H1 (cell line): ENCODE measurements at regions of chr12 and their contacts with region 1.

Region 1: DNA sequence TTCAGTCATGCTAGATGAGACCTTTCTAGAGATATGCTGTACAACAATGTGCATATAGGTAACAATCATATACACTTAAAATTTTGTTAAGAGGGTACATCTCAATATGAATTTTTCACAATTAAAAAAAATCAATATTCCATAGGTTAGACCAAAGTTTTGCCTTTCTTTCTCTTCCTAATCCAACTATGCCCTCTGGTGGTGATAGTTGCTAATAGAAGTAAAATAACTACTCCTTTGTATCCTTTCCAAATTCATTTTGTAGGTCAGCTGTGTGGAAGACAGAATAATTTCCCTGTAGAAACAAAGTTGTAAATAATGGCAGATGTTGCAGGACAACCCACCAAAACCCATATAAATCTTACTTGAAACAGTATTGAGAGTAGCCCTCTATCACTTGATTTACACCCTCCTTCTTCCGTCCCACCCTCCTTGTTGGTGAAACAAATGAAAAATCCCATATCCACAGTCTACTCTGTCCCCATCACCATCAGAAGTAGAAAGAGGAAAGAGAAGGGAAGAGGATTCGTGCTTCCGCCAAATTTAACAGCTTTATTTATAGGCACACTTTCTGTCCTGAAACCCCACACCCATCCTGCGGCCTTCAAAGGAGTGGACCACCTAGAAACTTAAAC is 34.2 kb upstream of the KICS2 start:
- DNase-seq: no peak
- H3K4me3 ChIP-seq: no peak overlapping the region
- H3K27ac ChIP-seq: no peak overlapping the region
- H3K4me1 ChIP-seq: peaks cover 0 to 2% (median 0%) of the 10 kb centered on the region in 4 experiments; a peak in 1 of 7 replicates
- H3K27me3 ChIP-seq: no peaks in the 10 kb centered on the region
- CTCF ChIP-seq: peak in 2 of 3 experiments; percentile 40 to 49; a peak in 2 of 4 replicates
- EP300 ChIP-seq: no peak
- POLR2A ChIP-seq: no peak
- RAD21 ChIP-seq: peak; percentile 76 to 90

Region 2: DNA sequence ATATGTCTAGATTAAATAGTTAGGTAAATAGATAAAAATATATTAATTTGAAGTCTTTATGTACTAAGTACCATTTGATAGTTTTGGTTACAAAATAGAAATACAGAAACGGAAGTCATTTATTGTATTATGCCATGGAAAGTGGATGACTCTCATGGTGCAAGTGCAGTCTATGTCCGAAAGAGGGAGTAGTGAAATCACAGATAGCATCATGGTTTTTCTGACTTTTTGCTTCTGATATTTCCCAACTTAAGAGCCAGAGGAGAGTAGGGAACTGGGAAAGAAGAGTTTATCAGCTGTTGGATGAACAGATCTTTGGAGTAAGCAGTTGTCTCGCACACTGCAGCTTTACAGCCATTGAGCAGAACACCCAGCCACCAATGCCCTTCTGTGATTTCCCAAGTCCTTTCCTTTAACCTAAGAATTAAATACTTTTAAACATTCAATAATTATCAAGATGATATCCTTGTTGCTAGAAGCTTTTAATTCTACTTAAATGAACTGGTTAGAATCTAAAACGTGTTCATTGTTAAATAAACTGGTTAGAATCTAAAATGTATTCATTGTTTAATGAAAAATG is 430.2 kb before region 1 on chr12:
- CTCF ChIA-PET with region 1: interaction called, 33 read pairs
- POLR2A ChIA-PET with region 1: no interaction called
- DNase-seq: no peak
- H3K4me3 ChIP-seq: no peak overlapping the region
- H3K27ac ChIP-seq: no peak overlapping the region
- H3K4me1 ChIP-seq: no peaks in the 10 kb centered on the region
- H3K27me3 ChIP-seq: no peaks in the 10 kb centered on the region
- CTCF ChIP-seq: peak in 2 of 3 experiments; percentile 60 to 77; a peak in 2 of 4 replicates
- EP300 ChIP-seq: no peak
- POLR2A ChIP-seq: no peak
- RAD21 ChIP-seq: peak; percentile 91 to 93

Region 3: GRCh38 chr12:64240781-64241180 is 15.5 kb before region 1 on chr12:
- CTCF ChIA-PET with region 1: interaction called, 18 read pairs
- POLR2A ChIA-PET with region 1: interaction called, 3 read pairs
- DNase-seq: no peak
- H3K4me3 ChIP-seq: no peak overlapping the region
- H3K27ac ChIP-seq: no peak overlapping the region
- H3K4me1 ChIP-seq: no peaks in the 10 kb centered on the region; a peak in 1 of 7 replicates
- H3K27me3 ChIP-seq: no peaks in the 10 kb centered on the region
- CTCF ChIP-seq: no peak
- EP300 ChIP-seq: no peak
- POLR2A ChIP-seq: no peak
- RAD21 ChIP-seq: no peak

Region 4: DNA sequence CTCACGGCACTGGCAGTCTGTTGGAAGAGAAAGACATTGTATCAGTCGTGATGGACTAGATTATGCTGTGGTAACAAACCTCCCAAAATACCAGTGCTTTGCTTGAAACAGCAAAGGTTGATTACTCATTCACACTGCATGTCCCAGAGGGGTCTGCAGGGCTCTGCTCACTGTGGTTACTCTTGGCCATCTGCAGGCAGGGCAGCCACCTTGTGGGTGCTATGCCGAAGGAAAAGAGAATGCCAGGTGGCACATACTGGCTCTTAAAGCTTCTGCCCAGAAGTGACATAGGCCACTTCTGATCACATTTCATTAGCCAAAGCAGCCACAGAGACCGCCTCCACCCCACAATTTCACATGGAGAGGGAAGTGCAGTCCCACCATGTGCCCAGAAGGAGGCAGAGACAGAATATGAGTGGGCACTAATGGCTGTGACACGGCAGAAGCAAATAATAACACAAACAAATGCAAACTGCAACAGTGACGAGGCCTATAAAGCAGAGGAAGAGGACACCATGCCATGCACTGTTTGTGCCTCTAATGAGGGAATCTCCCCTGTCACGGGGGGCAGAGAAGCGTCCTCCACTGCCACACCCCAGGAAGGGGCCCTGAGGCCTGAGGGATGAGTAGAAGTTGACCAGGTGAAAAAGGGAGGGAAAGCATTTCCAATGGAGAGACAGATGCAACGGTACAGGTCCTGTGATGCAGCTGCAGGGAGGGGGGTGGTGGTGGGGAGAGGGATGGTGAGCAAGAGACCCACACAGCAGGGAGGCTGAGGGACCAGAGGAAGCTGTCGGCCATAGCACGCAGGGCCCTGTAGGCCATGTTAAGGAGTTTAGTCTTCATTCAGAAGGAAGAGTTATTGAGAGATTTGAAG is 17.5 kb after region 1 on chr12:
- CTCF ChIA-PET with region 1: interaction called, 10 read pairs
- POLR2A ChIA-PET with region 1: interaction called, 3 read pairs
- DNase-seq: peak; percentile 38 to 71
- H3K4me3 ChIP-seq: no peak overlapping the region
- H3K27ac ChIP-seq: no peak overlapping the region
- H3K4me1 ChIP-seq: peaks cover 0 to 7% (median 3%) of the 10 kb centered on the region in 4 experiments; a peak in 3 of 7 replicates
- H3K27me3 ChIP-seq: no peaks in the 10 kb centered on the region
- CTCF ChIP-seq: peak; percentile 76 to 86 (median 78)
- EP300 ChIP-seq: no peak
- POLR2A ChIP-seq: no peak
- RAD21 ChIP-seq: peak; percentile 86 to 87